Activated CD4-positive, alpha-beta memory T cell treated with anti-CD3 and anti-CD28 coated beads for 36 hours (primary cell): ENCODE measurements at regions of chr17 and their contacts with region 1.

Region 1: GRCh38 chr17:28878981-28879380 is 18.6 kb downstream of the FLOT2 start:
- DNase-seq: peak; percentile 39
- H3K4me3 Mint-ChIP-seq: no peak overlapping the region
- H3K27ac Mint-ChIP-seq: no peak overlapping the region
- H3K4me1 Mint-ChIP-seq: peaks cover 32% of the 10 kb centered on the region
- H3K27me3 Mint-ChIP-seq: no peaks in the 10 kb centered on the region

Region 2: GRCh38 chr17:28849281-28849680 is 29.7 kb before region 1 on chr17:
- CTCF ChIA-PET with region 1: interaction called, 4 read pairs
- POLR2A ChIA-PET with region 1: interaction called, 7 read pairs
- intact Hi-C with region 1: loop called (anchors 1 kb)
- DNase-seq: peak; percentile 43
- H3K4me3 Mint-ChIP-seq: no peak overlapping the region
- H3K27ac Mint-ChIP-seq: no peak overlapping the region
- H3K4me1 Mint-ChIP-seq: peaks cover 4% of the 10 kb centered on the region
- H3K27me3 Mint-ChIP-seq: no peaks in the 10 kb centered on the region